ENCODE measurements at regions of chrX and their contacts with region 1.

Region 1: GRCh38 chrX:46978341-46979291 is 66.4 kb downstream of the JADE3 start:
- DNase-seq: peak; percentile 71
- ATAC-seq: no peak

Region 2: DNA sequence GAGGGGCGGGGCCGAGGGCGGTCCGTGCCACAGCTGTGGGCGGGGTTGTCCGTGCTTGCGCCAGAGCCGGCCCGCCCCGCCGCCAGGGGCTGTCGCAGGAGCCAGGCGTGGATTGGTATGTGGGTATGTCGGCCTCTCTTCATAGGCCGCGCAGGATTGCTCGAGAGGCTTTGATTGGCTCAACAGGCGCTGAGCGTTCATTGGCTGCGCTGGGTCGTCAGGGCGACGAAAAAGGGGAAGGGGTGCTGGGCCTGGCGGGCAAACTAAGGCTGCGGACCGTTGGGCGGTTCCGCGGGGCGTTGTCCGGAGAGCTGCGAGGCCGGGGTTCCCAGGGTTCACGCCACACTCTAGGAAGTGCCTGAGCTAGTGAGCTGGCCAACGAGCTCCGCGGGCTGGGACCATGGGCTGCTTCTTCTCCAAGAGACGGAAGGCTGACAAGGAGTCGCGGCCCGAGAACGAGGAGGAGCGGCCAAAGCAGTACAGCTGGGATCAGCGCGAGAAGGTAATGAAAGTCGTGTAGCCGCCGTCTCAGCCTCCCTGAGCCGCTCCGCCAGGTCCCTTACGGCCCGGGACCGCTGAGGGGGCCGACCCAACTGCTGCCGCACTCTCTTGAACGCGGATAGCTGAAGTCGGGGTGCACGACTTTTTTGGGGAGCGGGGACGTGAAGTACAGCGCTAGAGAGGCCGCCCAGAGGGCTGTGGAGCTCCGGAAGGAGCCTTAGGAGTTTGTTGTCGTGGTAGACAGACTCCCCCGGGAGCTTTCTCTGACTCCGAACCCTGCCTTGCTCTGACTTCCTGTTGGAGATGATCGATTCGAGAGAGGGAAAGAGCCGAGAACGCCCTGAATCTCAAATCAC is 141.7 kb before region 1 on chrX and contains the start of gene RP2:
- intact Hi-C with region 1: no loop called
- DNase-seq: peak; percentile 95
- ATAC-seq: peak; percentile 100
- total RNA-seq, gene RP2: 3.8 TPM

Region 3: DNA sequence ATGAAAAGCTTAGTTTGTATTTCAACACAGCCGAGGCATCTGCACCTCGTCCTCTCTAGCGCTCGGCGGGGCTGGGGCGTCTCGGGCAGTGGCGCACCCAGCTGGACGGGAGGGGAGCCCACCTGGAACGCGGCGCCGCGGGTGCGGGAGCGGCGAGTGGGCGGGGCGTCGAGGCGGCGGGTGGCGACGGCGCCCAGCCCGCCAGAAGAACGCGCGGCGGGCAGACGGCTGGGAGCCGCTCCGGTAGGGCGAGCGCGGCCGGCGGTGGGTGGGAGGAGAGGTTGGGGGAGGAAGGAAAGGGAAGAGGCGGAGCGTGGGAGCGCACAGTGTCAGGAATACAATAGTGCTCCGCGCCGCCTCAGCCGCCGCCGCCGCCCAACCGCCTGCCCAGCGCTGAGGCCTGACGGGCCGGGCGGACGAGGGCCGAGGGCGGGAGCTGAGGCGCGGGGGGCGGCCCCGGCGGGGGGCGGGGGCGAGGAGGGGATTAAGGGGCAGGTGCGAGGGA is 66.5 kb before region 1 on chrX and contains the start of gene JADE3:
- intact Hi-C with region 1: loop called (anchors 2 kb)
- DNase-seq: peak; percentile 90
- ATAC-seq: peak; percentile 96
- total RNA-seq, gene JADE3: 9.0 TPM

Region 4: DNA sequence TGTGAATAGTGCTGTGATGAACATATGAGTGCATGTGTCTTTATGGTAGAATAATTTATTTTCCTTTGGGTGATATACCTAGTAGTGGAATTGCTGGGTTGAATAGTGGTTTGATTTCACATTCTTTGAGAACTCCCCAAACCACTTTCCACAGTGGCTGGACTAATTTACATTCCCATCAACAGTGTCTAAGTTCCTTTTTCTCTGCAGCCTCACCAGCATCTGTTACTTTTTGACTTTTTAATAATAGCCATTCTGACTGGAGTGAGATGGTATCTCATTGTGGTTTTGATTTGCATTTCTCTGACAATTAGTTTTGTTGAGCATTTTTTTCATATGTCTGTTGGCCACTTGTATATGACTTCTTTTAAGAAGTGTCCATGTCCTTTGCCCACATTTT is 37.3 kb before region 1 on chrX:
- intact Hi-C with region 1: no loop called
- DNase-seq: no peak
- ATAC-seq: no peak

Region 5: DNA sequence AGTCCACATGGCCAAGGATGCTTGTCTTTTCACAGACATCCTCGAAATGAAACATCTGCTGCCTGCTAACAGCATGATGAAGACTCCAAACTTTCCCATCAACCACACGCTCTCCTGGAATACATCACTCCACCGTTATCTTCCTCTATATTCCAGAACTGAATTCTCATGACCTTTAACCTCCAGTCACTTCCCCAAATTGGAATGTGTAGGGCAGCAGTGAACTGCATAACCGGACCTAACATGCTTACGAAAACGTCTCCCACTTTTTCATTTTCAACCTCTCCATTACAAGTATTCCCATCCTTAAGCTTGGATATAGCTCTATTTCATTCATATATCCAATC is 535.1 kb after region 1 on chrX:
- intact Hi-C with region 1: no loop called
- DNase-seq: no peak
- ATAC-seq: no peak

Measured in Right ventricle myocardium inferior (tissue), 1 donor.